Activated B cell treated with CpG ODN at 0.5 μM for 24 hours (primary cell): ENCODE measurements at regions of chr2 and their contacts with region 1.

Region 1: DNA sequence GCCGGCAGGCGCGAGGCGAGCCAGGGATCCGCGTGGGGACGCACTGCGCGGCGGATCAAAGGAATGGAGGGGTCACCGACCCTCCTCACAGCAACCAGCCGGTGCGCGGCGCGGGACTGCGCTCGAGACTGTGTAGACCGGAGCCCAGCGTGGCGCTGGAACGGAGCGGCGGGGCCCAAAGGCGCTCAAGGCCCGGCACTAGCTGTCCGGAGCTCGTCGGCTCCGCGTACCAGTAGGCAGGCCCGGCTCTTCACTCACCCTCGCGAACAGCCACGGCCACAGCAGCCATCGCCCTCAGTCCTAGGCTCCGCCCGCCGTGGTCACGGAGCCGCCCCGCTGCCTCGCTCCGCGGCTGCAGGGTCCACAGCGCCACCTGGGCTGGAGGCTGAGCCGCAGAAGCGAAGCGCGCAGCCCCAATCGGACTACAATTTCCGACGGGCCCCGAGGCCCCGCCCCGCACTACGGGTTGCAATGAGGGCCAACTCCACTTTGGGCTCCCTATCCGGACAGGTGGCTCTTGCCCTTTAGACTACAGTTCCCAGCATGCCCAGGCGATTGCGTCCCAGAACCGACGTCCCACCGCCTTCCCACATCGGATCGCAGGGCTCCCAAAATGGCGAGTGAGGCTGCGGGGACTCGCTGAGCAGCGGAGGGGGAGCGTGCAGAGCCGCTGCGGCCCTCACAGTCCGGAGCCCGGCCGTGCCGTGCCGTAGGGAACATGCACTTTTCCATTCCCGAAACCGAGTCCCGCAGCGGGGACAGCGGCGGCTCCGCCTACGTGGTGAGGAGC is at the starts of genes EIF2B4 and SNX17:
- DNase-seq: peak; percentile 99
- ATAC-seq: peak; percentile 83
- H3K4me3 Mint-ChIP-seq: peak within 1 kb of the TSS; percentile 94
- H3K27ac Mint-ChIP-seq: peak within 1 kb of the TSS; percentile 98
- H3K4me1 Mint-ChIP-seq: peaks cover 35% of the 10 kb centered on the region
- H3K27me3 Mint-ChIP-seq: no peaks in the 10 kb centered on the region
- CTCF ChIP-seq: no peak
- total RNA-seq, gene EIF2B4: 43.3 and 49.9 TPM in 2 replicates
- total RNA-seq, gene SNX17: 124 and 128 TPM in 2 replicates

Region 2: DNA sequence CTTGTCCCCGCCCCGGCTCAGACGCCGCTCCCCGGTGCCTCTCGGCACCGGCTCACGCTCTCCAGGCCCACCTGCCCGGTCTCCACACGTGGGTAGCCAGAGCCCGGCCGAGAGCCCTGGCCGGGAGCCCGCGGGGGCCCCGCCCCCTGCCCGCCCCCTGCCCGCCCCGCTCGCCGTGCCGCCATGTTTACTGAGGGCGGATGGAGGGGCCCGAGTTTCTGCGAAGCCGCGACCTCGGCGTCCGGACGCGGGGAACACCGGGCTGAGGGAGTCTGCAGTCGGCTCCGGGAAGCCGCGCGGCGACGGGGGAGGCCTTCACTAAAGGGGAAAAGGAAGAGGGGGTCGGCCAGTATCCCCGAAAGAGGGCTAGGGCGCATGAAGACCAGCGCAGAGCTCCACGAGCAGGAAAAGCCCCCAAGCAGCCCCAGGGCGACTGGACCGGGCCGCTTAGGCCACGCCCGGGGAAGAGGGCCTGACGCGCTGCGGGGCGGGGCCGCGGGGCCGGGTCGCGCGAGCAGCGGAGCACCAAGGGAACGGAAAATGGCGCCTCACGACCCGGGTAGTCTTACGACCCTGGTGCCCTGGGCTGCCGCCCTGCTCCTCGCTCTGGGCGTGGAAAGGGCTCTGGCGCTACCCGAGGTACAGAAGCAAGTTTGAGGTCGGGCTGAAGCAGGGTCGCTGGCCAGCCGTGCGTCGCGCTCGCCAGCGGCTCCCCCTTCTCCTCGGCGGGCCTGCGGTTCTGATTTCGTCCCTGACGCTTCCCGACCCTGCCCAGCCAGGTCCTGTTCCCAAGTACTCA is 158.2 kb before region 1 on chr2 and contains the starts of genes ATRAID and SLC5A6:
- CTCF ChIA-PET with region 1: no interaction called
- POLR2A ChIA-PET with region 1: interaction called, 12 read pairs
- intact Hi-C with region 1: loop called (anchors 1 kb)
- DNase-seq: peak; percentile 96
- ATAC-seq: peak; percentile 88
- H3K4me3 Mint-ChIP-seq: peak within 1 kb of the TSS; percentile 97
- H3K27ac Mint-ChIP-seq: peak within 1 kb of the TSS; percentile 100
- H3K4me1 Mint-ChIP-seq: peaks cover 33% of the 10 kb centered on the region
- H3K27me3 Mint-ChIP-seq: no peaks in the 10 kb centered on the region
- CTCF ChIP-seq: no peak
- total RNA-seq, gene ATRAID: 73.9 and 77.2 TPM in 2 replicates
- total RNA-seq, gene SLC5A6: 53.2 and 69.9 TPM in 2 replicates

Region 3: GRCh38 chr2:27356382-27357181 is 13.6 kb before region 1 on chr2 and contains the start of gene GTF3C2:
- CTCF ChIA-PET with region 1: interaction called, 6 read pairs
- POLR2A ChIA-PET with region 1: interaction called, 76 read pairs
- intact Hi-C with region 1: loop called (anchors 1 kb)
- DNase-seq: peak; percentile 87
- ATAC-seq: peak; percentile 83
- H3K4me3 Mint-ChIP-seq: peak within 1 kb of the TSS; percentile 98
- H3K27ac Mint-ChIP-seq: peak within 1 kb of the TSS; percentile 100
- H3K4me1 Mint-ChIP-seq: peaks cover 53% of the 10 kb centered on the region
- H3K27me3 Mint-ChIP-seq: no peaks in the 10 kb centered on the region
- CTCF ChIP-seq: no peak
- total RNA-seq, gene GTF3C2: 91.7 and 119 TPM in 2 replicates

Region 4: DNA sequence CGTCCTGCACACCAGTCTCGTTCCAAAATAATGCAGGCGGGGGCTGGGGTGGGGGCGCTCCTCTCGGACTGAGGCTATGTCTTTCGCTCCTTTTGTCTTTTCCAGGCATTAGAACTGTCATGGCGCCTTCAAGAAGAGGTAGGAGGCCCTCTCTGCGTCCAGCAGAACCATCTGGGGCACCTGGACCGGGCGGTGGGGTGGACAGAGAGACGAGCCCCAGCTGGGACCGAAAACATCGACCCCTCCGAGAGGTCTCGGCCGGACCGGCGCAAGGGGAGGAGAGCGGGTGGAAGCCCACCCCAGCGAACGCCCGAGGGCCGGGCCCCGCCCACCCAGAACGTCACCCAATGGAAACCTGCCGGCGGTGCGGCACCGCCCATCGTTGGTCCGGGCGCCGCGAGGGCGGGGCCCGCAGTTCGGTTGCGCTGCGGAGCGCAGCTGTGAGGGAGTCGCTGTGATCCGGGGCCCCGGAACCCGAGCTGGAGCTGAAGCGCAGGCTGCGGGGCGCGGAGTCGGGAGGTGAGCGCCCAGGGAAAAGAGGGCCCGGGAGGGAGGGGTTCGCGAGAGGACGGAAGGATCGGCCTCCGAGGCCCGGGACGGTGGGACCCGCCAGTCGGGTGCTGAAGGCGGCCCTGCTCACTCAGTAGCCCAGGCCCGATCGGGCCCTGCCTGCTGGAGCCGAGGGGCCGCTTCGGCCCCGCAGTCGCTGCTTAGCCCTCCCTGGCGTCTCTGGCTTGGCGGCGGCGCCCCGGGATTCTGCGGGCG is 58.2 kb after region 1 on chr2 and contains the start of gene NRBP1:
- CTCF ChIA-PET with region 1: interaction called, 4 read pairs
- POLR2A ChIA-PET with region 1: interaction called, 23 read pairs
- intact Hi-C with region 1: loop called (anchors 1 kb)
- DNase-seq: peak; percentile 95
- ATAC-seq: peak; percentile 90
- H3K4me3 Mint-ChIP-seq: peak within 1 kb of the TSS; percentile 98
- H3K27ac Mint-ChIP-seq: peak within 1 kb of the TSS; percentile 98
- H3K4me1 Mint-ChIP-seq: peaks cover 50% of the 10 kb centered on the region
- H3K27me3 Mint-ChIP-seq: no peaks in the 10 kb centered on the region
- CTCF ChIP-seq: no peak
- total RNA-seq, gene NRBP1: 78.9 and 82.3 TPM in 2 replicates

Region 5: DNA sequence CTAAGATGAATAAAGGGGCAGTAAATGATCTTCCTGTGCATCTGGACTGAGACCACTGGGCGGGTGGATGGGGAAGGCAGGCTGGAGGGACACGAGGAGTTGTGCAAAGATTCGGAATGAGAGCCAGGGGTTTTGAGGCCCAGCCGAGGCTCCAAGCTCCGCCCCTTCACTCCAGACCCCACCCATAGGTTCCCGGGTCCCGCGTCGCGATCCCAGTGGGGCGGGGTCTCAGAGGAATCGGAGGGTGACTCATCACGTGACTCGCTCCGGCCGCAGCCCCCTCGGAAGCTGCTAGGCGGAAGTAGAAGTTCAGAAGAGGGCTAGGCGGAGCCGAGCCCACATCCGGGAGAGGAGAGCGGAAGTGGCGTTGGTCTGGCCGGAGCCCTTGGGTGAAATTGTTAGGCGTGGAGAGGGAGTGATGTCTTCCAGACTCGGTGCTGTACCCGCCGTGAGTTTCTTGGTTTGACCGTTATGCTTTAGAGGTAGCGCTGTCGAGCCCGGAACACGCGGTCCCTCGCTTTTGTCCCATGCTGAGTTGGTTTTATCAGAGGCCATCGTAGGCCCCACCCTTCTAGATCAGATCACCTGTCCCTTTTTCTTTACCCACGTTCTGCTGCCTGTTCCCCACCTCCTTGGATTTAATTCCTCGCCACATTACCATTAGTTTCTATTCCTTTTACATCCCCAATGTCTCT is 212.6 kb after region 1 on chr2 and contains the start of gene ZNF512:
- CTCF ChIA-PET with region 1: no interaction called
- POLR2A ChIA-PET with region 1: interaction called, 8 read pairs
- intact Hi-C with region 1: loop called (anchors 1 kb)
- DNase-seq: peak; percentile 81
- ATAC-seq: peak; percentile 95
- H3K4me3 Mint-ChIP-seq: peak within 1 kb of the TSS; percentile 97
- H3K27ac Mint-ChIP-seq: peak within 1 kb of the TSS; percentile 90
- H3K4me1 Mint-ChIP-seq: peaks cover 48% of the 10 kb centered on the region
- H3K27me3 Mint-ChIP-seq: peaks cover 4% of the 10 kb centered on the region
- CTCF ChIP-seq: no peak
- total RNA-seq, gene ZNF512: 45.4 and 48.7 TPM in 2 replicates

Region 6: DNA sequence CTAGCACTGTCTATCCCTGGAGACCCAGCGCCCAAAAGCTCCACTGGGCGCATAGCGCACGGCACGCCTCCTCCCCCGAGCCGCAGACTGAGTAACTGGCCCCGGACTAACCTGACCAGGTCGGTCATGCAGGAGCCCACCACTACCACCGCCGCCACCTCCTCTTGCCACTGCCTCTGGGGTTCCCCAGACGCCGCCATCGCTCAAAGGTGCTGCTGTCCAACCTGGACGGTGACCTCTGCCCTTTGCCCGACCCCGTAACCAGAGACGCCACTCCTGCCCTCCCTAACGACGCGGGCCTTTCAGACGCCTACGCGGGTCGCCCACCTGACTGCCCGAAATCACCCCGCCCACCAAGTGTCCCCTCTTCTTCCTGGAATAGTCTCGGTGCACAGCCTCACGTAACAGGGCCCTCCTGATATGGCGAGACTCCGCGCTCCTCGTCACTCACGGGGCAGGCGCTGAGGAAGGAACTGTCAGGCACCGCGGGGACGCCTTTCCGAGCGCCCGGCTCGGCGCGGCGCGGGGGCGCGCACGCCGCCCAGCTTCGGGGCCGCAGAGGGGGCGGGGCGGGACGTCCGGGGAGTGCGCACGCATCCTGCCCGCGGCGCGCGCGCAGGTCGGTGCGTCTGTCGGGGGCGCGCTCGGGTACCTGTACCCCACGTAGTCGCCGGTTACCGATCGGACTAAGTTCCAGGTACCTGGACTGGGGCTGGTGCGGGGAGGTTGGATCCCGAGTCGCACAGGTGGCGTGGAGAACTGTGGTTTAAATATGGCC is 520.1 kb after region 1 on chr2 and contains the starts of genes BABAM2 and RBKS:
- CTCF ChIA-PET with region 1: no interaction called
- POLR2A ChIA-PET with region 1: no interaction called
- intact Hi-C with region 1: loop called (anchors 5 kb)
- DNase-seq: peak; percentile 93
- ATAC-seq: peak; percentile 78
- H3K4me3 Mint-ChIP-seq: peak within 1 kb of the TSS; percentile 99
- H3K27ac Mint-ChIP-seq: peak within 1 kb of the TSS; percentile 99
- H3K4me1 Mint-ChIP-seq: peaks cover 74% of the 10 kb centered on the region
- H3K27me3 Mint-ChIP-seq: peaks cover 2% of the 10 kb centered on the region
- CTCF ChIP-seq: no peak
- total RNA-seq, gene BABAM2: 51.9 and 55.6 TPM in 2 replicates
- total RNA-seq, gene RBKS: 2.5 and 3.1 TPM in 2 replicates